Naive thymus-derived CD4-positive, alpha-beta T cell (primary cell): ENCODE measurements at regions of chr1 and their contacts with region 1.

Region 1: DNA sequence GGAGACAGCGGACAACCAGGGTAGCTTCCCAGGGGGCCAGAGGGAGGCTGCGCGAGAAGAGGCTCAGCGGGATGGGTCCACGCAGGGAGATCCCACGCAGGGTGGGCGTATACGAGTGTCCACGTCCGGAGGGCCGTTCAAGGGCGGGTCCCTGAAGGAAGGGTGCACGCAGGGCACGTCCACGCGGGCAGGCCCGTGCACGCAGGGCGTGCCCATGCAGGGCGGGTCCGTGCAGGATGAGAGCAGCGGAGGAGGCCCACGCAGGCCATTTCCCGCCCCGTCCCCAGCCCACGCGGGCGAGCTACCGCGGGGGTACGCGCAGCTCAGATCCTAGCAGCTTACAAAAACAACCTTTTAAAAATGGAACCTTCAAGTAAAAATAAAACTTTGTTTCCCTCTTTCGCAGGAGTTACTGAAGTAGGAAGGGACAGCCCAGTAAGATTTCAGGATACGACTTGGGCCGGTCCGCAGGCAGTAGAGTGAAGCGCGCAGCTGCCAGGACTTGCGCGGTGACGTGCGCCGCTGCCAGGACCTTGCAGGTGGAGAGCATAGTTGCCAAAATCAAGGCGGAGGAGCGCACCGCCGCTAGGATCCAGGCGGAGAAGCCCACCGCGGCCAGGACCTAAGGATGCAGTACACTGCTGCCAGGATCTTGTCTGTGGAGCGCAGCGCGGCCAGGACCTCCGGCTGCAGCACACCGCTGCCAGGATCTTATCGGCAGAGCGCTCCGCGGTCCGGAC is 416 bp upstream of the RNF187 start:
- DNase-seq: peak; percentile 76 to 91 (median 86)
- ATAC-seq: peak; percentile 85
- H3K4me3 ChIP-seq: peak overlapping the region; percentile 98
- H3K4me3 Mint-ChIP-seq: peak overlapping the region; percentile 92 to 99 (median 98)
- H3K27ac ChIP-seq: peak overlapping the region; percentile 99
- H3K27ac Mint-ChIP-seq: peak overlapping the region; percentile 99 to 100 (median 100)
- H3K4me1 ChIP-seq: peaks cover 15 to 19% of the 10 kb centered on the region in 2 donors
- H3K4me1 Mint-ChIP-seq: peaks cover 14 to 49% (median 36%) of the 10 kb centered on the region in 7 donors
- H3K27me3 ChIP-seq: no peaks in the 10 kb centered on the region
- H3K27me3 Mint-ChIP-seq: no peaks in the 10 kb centered on the region

Region 2: DNA sequence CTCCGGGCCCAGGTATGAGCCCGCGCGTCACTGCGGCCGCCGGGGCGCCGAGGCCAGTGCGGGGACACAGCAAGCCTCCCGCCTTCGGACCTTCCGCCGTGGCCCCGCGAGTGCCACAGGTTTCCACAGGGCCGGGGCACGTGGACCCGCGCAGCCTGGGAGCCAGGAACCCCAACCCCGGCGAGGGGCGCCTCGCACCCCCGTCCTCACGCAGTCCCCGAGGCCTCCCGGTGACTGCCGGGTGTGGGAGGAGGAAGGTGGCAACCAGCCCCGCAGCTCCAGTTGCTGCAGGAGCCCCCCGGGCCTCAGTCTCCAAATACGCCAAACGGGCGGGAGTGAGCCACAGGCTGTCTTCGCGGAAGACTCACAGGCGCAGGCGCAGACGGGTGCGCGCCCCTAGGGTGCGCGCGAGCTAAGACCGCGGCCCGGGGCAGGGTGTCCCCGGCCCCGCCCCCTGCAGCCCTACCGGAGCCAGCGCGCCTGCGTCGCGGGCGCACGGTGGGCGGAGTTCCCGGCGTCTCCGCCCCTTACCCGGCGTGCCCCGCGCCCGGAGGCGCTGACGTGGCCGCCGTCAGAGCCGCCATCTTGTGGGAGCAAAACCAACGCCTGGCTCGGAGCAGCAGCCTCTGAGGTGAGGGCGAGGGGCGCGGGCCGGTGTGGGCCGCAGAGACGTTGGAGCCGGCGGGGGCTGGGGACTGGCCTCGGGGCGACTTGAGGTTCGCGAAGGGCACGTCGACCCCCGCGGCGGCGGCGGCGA is 404.5 kb before region 1 on chr1 and contains the start of gene ARF1:
- CTCF ChIA-PET with region 1: no interaction called
- POLR2A ChIA-PET with region 1: interaction called, 7 read pairs
- intact Hi-C with region 1: loop called in 1 of 2 experiments (anchors 1 kb)
- DNase-seq: peak; percentile 89 to 99 (median 96)
- ATAC-seq: peak; percentile 97
- H3K4me3 ChIP-seq: peak within 1 kb of the TSS; percentile 88
- H3K4me3 Mint-ChIP-seq: peak within 1 kb of the TSS; percentile 89 to 97 (median 95)
- H3K27ac ChIP-seq: peak within 1 kb of the TSS; percentile 97
- H3K27ac Mint-ChIP-seq: peak within 1 kb of the TSS; percentile 76 to 97 (median 95)
- H3K4me1 ChIP-seq: peaks cover 41 to 43% of the 10 kb centered on the region in 2 donors
- H3K4me1 Mint-ChIP-seq: peaks cover 36 to 66% (median 52%) of the 10 kb centered on the region in 7 donors
- H3K27me3 ChIP-seq: no peaks in the 10 kb centered on the region
- H3K27me3 Mint-ChIP-seq: no peaks in the 10 kb centered on the region
- total RNA-seq, gene ARF1: 198 to 390 (median 259) TPM

Region 3: GRCh38 chr1:228212966-228213844 is 273.6 kb before region 1 on chr1:
- CTCF ChIA-PET with region 1: no interaction called
- POLR2A ChIA-PET with region 1: interaction called, 4 read pairs
- intact Hi-C with region 1: loop called (anchors 1 kb)
- DNase-seq: peak; percentile 71 to 88 (median 82)
- ATAC-seq: peak; percentile 95
- H3K4me3 ChIP-seq: peak overlapping the region; percentile 68
- H3K4me3 Mint-ChIP-seq: peak overlapping the region; percentile 77 to 95 (median 91)
- H3K27ac ChIP-seq: peak overlapping the region; percentile 73
- H3K27ac Mint-ChIP-seq: peak overlapping the region; percentile 28 to 96 (median 88)
- H3K4me1 ChIP-seq: no peaks in the 10 kb centered on the region
- H3K4me1 Mint-ChIP-seq: peaks cover 3 to 13% (median 5%) of the 10 kb centered on the region in 7 donors
- H3K27me3 ChIP-seq: no peaks in the 10 kb centered on the region
- H3K27me3 Mint-ChIP-seq: no peaks in the 10 kb centered on the region

Region 4: GRCh38 chr1:228405987-228406265 is 80.8 kb before region 1 on chr1:
- CTCF ChIA-PET with region 1: no interaction called
- POLR2A ChIA-PET with region 1: interaction called, 6 read pairs
- intact Hi-C with region 1: loop called (anchors 2 kb)
- DNase-seq: no peak
- ATAC-seq: no peak
- H3K4me3 ChIP-seq: peak overlapping the region; percentile 74
- H3K4me3 Mint-ChIP-seq: peak overlapping the region; percentile 80 to 99 (median 94)
- H3K27ac ChIP-seq: peak overlapping the region; percentile 86
- H3K27ac Mint-ChIP-seq: peak overlapping the region; percentile 36 to 92 (median 80)
- H3K4me1 ChIP-seq: peaks cover 36 to 41% of the 10 kb centered on the region in 2 donors
- H3K4me1 Mint-ChIP-seq: peaks cover 46 to 77% (median 56%) of the 10 kb centered on the region in 7 donors
- H3K27me3 ChIP-seq: no peaks in the 10 kb centered on the region
- H3K27me3 Mint-ChIP-seq: no peaks in the 10 kb centered on the region

Region 5: GRCh38 chr1:228471762-228472398 is 14.9 kb before region 1 on chr1:
- CTCF ChIA-PET with region 1: interaction called, 4 read pairs
- POLR2A ChIA-PET with region 1: interaction called, 8 read pairs
- intact Hi-C with region 1: loop called in 1 of 2 experiments (anchors 1 kb)
- DNase-seq: peak in 3 of 9 donors; percentile 10 to 28 (median 18)
- ATAC-seq: peak; percentile 71
- H3K4me3 ChIP-seq: no peak overlapping the region
- H3K4me3 Mint-ChIP-seq: no peak overlapping the region
- H3K27ac ChIP-seq: no peak overlapping the region
- H3K27ac Mint-ChIP-seq: peak overlapping the region in 2 of 9 donors; percentile 1 to 37
- H3K4me1 ChIP-seq: no peaks in the 10 kb centered on the region
- H3K4me1 Mint-ChIP-seq: peaks cover 0 to 28% (median under 1%) of the 10 kb centered on the region in 7 donors
- H3K27me3 ChIP-seq: no peaks in the 10 kb centered on the region
- H3K27me3 Mint-ChIP-seq: peaks cover 24 to 42% (median 27%) of the 10 kb centered on the region in 5 donors

Region 6: DNA sequence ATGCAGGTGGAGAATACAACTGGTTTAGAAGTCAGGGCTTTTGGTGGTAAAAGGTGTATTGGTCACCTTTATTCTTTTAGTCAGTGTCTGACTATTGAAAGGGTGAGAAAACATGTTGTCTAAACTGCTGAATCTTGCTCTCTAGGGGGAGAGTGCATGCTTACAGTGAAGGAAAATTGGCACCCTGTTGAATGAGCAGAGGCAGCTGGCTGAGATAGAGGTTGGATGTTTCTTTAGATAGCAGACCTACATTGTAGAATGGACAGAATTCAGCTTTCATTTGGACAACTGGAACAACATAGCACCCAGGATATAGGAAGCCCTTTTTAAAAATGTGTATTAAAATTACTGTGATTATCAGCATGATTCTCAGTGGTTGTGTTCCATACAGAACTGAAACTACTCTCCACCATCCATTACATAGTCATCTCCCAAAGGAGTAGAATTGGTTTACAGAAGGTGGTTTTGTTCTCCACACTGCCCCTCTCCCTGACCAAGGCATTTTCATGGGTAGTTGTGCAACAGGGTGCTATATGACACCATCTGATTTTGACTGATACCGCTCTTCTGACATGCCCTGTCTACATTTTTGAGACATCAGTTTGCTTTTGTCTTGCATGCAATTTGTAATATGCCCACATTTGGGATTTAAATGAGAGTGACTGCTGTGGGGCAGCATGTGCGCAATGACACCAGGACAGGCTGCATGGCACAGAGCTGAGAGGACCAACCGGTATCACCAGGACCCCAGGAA is 264.8 kb after region 1 on chr1:
- CTCF ChIA-PET with region 1: no interaction called
- POLR2A ChIA-PET with region 1: no interaction called
- intact Hi-C with region 1: no loop called
- DNase-seq: no peak
- ATAC-seq: peak; percentile 27
- H3K4me3 ChIP-seq: no peak overlapping the region
- H3K4me3 Mint-ChIP-seq: no peak overlapping the region
- H3K27ac ChIP-seq: no peak overlapping the region
- H3K27ac Mint-ChIP-seq: no peak overlapping the region
- H3K4me1 ChIP-seq: peaks cover 0 to 15% of the 10 kb centered on the region in 2 donors
- H3K4me1 Mint-ChIP-seq: peaks cover 0 to 38% (median 7%) of the 10 kb centered on the region in 7 donors
- H3K27me3 ChIP-seq: no peaks in the 10 kb centered on the region
- H3K27me3 Mint-ChIP-seq: peaks cover 12 to 54% (median 18%) of the 10 kb centered on the region in 5 donors

Region 7: DNA sequence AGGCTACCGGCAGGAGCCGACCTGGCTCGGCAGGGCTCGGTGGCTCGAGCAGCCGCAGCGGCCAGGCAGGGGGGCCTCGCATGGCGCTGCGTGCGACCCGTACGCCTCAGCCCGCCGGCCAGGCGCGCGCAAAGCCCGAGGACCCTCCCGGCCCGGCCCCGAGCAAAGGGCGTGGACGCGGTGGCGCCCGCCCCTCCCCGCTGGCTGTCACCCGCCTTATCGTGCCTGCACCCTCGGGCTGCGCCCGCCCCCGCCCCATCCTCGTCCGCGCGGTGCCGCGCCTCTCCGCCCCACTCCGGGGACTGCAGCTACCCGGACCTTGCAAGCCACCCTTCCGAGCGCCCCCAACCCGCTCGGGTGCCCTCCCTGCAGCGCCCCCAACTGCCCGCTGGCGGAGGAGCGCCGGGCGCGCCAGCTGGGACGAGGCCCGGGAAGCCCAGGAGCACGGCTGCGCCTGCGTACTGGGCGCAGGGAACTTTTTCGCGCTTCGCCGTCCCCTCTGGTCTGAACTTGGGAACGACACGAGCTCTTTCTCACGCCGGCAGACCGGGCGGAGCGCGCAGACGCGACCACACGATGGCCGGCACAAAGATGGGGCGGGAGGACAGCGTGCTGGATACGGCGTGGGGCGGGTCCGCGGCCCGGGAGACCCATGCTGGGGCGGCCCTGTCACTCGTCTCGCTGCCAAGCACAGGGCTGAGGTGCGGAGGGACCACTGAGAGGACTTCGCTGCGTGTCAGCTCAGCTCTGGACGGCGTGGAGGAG is 1072.0 kb after region 1 on chr1 and contains the start of gene ABCB10:
- CTCF ChIA-PET with region 1: no interaction called
- POLR2A ChIA-PET with region 1: no interaction called
- intact Hi-C with region 1: loop called in 1 of 2 experiments (anchors 2 kb)
- DNase-seq: peak; percentile 68 to 96 (median 80)
- ATAC-seq: peak; percentile 85
- H3K4me3 ChIP-seq: peak within 1 kb of the TSS; percentile 88
- H3K4me3 Mint-ChIP-seq: peak within 1 kb of the TSS; percentile 91 to 97 (median 95)
- H3K27ac ChIP-seq: peak within 1 kb of the TSS; percentile 65
- H3K27ac Mint-ChIP-seq: peak within 1 kb of the TSS; percentile 64 to 92 (median 87)
- H3K4me1 ChIP-seq: peaks cover 15 to 16% of the 10 kb centered on the region in 2 donors
- H3K4me1 Mint-ChIP-seq: peaks cover 37 to 46% (median 41%) of the 10 kb centered on the region in 7 donors
- H3K27me3 ChIP-seq: no peaks in the 10 kb centered on the region
- H3K27me3 Mint-ChIP-seq: peaks cover 0 to 6% (median 0%) of the 10 kb centered on the region in 5 donors
- total RNA-seq, gene ABCB10: 14.1 to 31.9 (median 18.4) TPM